PC-9 (cell line): ENCODE measurements at regions of chr2 and their contacts with region 1.

Region 1: DNA sequence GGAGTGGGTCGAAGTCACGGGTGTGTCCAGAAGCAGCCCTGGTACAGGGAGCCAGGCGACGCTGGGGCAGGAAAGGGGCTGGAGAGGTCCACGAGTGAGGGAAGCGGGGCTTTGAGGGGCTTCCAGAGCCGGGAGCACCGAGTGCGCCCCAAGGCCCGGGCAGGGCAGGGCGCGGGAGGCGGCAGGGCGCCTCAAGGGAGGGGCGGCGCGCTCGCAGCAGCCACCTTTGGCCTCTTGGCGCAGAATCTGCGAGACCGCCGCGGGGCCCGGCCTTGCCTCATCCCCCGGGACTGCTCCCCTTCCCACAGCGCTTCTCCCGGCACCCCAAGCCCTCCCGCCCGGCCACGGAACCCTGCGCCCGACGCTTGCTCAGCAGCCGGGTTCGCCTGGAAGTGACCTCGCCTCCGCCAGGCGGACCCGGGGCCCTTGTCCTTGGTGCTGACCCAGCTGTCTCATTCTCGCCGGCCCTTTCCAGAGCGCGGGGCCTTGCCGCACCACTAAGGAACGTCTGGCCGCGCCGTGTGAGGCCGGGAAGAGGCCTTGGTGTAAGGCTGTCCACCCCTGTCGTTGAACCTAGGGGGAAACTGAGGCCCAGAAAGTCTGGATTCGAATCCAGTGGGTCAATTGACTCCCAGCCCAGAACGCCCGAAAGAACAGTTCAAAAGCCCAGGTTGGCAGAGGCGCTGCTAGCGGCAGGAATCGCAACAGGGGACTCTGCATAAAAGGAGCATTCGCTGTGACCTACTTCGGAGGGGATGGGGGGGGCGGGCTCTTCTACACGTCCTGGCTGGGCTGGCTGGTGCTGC is 584 bp upstream of the DNER start:
- DNase-seq: peak in 1 of 2 experiments; percentile 43
- H3K4me3 ChIP-seq: peak overlapping the region; percentile 58
- H3K27ac ChIP-seq: no peak overlapping the region
- H3K4me1 ChIP-seq: 0 out of 2 replicates have a peak, but pooled peaks cover 7% of the 10 kb centered on the region
- H3K27me3 ChIP-seq: peaks cover 13% of the 10 kb centered on the region
- CTCF ChIP-seq: no peak

Region 2: DNA sequence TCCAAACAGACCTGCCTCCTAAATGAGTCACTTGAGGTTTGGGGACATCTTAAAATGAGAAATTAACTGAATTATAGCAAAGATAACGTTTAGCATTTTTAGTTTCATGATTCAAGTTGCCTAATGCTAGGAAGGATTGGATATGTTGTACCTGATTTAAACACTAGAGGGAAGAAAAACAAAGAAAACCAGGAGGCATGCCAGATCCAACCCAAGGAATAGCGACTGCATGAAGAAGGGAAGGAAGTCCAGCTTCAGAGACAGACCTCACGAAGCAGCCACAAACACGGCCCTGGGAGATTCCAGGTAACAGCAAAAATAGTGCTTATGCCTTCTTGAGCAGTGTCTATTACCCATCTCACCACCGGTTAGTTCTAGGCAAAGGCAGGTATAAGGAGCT is 1033.5 kb before region 1 on chr2:
- CTCF ChIA-PET with region 1: no interaction called
- POLR2A ChIA-PET with region 1: no interaction called
- intact Hi-C with region 1: loop called (anchors 10 kb)
- DNase-seq: no peak
- H3K4me3 ChIP-seq: no peak overlapping the region
- H3K27ac ChIP-seq: no peak overlapping the region
- H3K4me1 ChIP-seq: no peaks in the 10 kb centered on the region
- H3K27me3 ChIP-seq: no peaks in the 10 kb centered on the region
- CTCF ChIP-seq: peak; percentile 65

Region 3: DNA sequence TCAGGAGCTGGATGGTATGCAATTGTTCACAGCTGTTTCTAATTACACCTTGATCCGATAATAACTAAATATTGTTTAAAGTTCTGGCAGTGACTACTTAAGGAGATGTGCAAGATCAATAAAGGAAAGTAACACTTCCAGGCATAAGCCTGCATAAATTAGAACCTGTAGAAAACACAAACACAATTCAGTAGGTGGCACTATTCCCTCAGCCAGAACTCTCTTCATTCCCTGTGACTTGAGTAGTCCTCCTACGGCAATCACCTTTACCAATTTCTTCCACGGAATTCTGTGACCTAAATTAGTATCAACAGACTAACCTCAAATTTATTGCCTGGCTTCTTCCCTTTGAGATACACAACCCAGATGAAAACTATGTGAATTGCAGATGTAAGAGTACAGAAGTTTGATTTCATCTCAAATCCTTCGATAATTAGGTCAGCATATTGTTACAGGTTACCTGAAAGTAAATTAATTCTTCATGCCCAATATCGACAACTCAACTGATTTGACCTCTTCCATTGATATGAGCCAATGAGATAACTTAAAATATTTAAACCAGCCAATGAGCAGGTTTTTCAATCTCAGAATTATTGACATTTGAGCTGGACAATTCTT is 581.7 kb before region 1 on chr2:
- CTCF ChIA-PET with region 1: interaction called, 5 read pairs
- POLR2A ChIA-PET with region 1: no interaction called
- intact Hi-C with region 1: loop called (anchors 1 kb)
- DNase-seq: peak in 1 of 2 experiments; percentile 7
- H3K4me3 ChIP-seq: no peak overlapping the region
- H3K27ac ChIP-seq: no peak overlapping the region
- H3K4me1 ChIP-seq: peaks cover 14% of the 10 kb centered on the region; the same call in 1 of the 2 replicates
- H3K27me3 ChIP-seq: no peaks in the 10 kb centered on the region
- CTCF ChIP-seq: peak; percentile 67

Region 4: DNA sequence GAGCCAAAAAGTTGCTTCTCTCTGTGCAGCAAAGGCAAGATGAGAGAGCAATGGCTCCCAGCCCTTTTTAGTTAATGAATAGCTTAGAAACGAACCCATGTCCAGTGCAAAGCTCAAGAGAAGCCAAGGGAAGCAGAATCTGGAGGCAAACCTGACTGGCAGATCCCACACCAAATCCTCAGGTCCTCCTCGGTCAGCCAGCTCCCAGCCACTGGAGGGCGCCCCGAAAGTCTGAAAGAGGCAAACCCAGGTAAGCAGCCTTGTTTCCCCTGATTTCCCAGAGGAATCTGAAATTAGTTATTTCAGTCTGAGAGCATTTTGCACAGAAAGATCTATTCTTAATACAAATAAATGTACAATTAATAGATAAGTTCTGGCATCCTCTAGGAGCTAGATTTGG is 372.6 kb before region 1 on chr2:
- CTCF ChIA-PET with region 1: interaction called, 3 read pairs
- POLR2A ChIA-PET with region 1: no interaction called
- intact Hi-C with region 1: loop called (anchors 5 kb)
- DNase-seq: peak in 1 of 2 experiments; percentile 45
- H3K4me3 ChIP-seq: no peak overlapping the region
- H3K27ac ChIP-seq: no peak overlapping the region
- H3K4me1 ChIP-seq: no peaks in the 10 kb centered on the region
- H3K27me3 ChIP-seq: no peaks in the 10 kb centered on the region
- CTCF ChIP-seq: peak; percentile 68

Region 5: DNA sequence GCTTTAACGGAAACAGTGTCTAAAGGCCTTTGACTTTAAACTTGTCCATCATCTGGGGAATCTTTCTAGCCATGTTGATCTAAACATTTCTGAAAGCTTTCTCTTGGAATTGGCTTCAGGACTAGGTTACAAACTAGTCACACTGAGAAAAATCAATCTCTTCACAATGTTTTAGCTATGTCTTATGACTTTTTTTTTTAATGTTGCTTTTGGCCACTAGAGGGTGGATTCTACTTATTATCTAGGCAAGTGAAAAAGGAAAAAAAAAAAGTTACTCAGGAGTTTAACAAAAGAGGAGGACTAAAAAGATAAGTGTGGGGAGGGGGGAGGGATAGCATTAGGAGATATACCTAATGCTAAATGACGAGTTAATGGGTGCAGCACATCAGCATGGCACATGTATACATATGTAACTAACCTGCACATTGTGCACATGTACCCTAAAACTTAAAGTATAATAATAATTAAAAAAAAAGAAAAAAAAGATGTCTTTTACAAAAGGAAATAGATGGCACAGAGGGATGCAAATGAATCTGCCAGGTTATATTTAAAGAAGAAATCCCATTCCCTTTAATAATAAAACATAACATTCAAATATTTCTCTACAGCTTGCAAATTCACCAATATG is 283.5 kb before region 1 on chr2:
- CTCF ChIA-PET with region 1: no interaction called
- POLR2A ChIA-PET with region 1: no interaction called
- intact Hi-C with region 1: loop called (anchors 1 kb)
- DNase-seq: peak in 1 of 2 experiments; percentile 62
- H3K4me3 ChIP-seq: no peak overlapping the region
- H3K27ac ChIP-seq: no peak overlapping the region
- H3K4me1 ChIP-seq: 0 out of 2 replicates have a peak, but pooled peaks cover 10% of the 10 kb centered on the region
- H3K27me3 ChIP-seq: no peaks in the 10 kb centered on the region
- CTCF ChIP-seq: peak; percentile 75